Activated CD4-positive, alpha-beta memory T cell treated with anti-CD3 and anti-CD28 coated beads, Interleukin-2, amount 10 ng/mL, durations not matched to agents 7 days and 5 days (primary cell): ENCODE measurements at regions of chr15 and their contacts with region 1.

Region 1: DNA sequence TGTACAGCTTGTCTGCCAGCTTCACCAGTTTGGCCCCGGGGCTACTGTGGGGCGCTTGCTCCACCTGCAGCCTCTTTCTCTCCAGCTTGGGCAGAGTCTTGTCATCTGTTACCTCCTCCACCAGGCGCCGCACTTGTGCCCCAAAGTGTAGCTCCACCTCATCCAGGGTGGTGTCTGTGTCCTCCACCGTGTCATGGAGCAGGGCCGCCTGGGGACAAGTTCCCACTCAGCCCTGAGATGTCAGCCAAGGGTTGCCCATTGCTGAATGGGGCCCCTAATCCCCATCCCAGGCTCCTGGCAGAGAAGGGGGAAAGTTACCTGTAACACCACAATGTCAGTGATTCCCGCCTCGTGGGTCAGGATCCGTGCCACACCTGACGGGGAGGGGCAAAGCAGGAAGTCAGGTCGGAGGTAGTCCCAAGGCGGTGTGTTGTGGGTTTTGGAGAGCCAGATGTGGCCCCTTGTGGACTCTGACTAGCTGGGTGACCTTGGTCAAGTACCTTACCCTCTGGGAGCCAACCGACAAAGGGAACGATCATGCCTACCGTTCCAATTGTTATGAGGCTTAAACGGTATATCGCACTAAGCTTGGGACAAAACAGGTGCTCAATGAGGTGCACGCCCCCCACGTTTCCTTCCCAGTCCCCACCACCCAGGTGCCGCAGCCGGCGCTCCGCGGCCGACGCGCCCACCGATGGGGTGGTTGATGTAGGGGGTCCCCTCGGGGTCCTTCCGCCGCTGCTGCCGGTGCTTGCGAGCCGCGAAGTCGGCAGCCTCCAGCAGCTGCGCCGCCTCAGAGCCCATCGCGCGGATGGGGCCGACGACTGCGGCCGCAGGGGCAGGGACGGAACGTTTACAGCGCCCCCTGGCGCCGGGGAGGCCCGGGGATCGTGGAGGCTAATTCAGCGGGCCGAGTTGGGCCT is at the start of gene HDDC3:
- DNase-seq: peak; percentile 93
- H3K4me3 Mint-ChIP-seq: peak within 1 kb of the TSS; percentile 99
- H3K27ac Mint-ChIP-seq: peak within 1 kb of the TSS; percentile 99
- H3K4me1 Mint-ChIP-seq: peaks cover 61% of the 10 kb centered on the region
- H3K27me3 Mint-ChIP-seq: no peaks in the 10 kb centered on the region
- total RNA-seq, gene HDDC3: 37.6 to 41.7 TPM

Region 2: DNA sequence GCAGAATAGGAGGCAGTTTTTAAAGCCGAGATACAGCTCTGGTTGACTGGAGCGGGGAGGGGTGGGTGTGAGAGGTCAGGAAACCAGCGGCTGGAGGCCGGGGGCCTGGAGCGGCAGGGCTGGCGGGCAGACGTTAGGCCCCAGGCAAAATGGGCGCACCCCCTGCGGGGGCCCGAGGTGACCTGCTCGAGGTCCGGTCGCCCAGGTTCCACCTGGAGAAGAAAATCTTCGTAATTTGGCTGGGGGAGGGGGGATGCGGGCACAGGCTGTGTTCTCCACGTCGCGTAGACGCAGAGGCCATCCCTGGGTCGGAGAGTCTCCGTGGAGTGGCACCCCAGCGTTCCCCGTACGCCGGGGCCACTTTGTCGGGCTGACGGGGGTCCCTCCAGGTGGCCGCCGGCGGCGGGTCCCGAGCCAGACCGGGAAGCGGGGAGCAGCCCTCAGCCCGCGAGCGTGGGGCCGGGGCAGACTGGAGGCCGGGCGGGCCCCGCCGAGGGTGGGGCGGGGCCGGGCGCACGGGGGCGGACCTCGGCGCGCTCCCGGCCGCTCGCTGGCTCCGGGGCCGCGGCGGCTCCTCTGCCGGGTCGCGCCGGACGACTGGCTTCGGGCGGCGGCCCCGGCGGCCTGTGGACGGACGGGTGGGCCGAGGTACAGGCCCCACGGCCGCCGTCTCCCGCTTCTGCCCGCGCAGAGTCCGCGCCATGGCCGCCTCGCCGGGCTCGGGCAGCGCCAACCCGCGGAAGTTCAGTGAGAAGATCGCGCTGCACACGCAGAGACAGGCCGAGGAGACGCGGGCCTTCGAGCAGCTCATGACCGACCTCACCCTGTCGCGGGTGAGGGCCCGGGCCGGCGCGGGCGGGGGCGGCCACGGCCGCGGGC is 402.4 kb before region 1 on chr15 and contains the start of gene CRTC3:
- CTCF ChIA-PET with region 1: interaction called, 4 read pairs
- POLR2A ChIA-PET with region 1: interaction called, 14 read pairs
- DNase-seq: peak; percentile 64
- H3K4me3 Mint-ChIP-seq: peak within 1 kb of the TSS; percentile 94
- H3K27ac Mint-ChIP-seq: peak within 1 kb of the TSS; percentile 79
- H3K4me1 Mint-ChIP-seq: peaks cover 51% of the 10 kb centered on the region
- H3K27me3 Mint-ChIP-seq: no peaks in the 10 kb centered on the region
- total RNA-seq, gene CRTC3: 86.0 to 89.3 TPM

Region 3: GRCh38 chr15:90818251-90819210 is 113.5 kb before region 1 on chr15:
- CTCF ChIA-PET with region 1: interaction called, 8 read pairs
- POLR2A ChIA-PET with region 1: interaction called, 19 read pairs
- DNase-seq: peak; percentile 62
- H3K4me3 Mint-ChIP-seq: peak overlapping the region; percentile 18
- H3K27ac Mint-ChIP-seq: peak overlapping the region; percentile 93
- H3K4me1 Mint-ChIP-seq: peaks cover 80% of the 10 kb centered on the region
- H3K27me3 Mint-ChIP-seq: no peaks in the 10 kb centered on the region

Region 4: DNA sequence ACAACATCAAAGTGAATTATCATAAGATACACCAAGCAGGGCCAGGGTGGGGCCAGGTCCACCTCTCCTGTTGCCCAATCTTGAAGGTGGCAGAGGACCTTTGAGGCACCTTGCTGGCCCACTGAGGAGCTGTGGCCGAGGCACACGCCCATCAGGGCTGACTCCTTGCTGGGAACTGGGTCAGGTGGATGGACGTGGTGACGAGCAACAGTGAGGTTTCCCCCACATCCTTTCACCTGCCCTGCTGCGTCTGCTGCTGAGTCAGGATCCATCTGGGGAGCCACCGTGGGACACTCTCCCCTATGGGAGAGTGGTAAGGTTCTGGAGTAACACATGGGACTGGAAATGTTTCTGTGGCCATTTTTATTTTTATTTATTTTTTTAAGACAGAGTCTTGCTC is 80.9 kb before region 1 on chr15:
- CTCF ChIA-PET with region 1: interaction called, 7 read pairs
- POLR2A ChIA-PET with region 1: interaction called, 12 read pairs
- DNase-seq: peak; percentile 80
- H3K4me3 Mint-ChIP-seq: peak overlapping the region; percentile 63
- H3K27ac Mint-ChIP-seq: peak overlapping the region; percentile 91
- H3K4me1 Mint-ChIP-seq: peaks cover 77% of the 10 kb centered on the region
- H3K27me3 Mint-ChIP-seq: no peaks in the 10 kb centered on the region

Region 5: GRCh38 chr15:90895336-90896117 is 36.5 kb before region 1 on chr15:
- CTCF ChIA-PET with region 1: interaction called, 210 read pairs
- POLR2A ChIA-PET with region 1: interaction called, 211 read pairs
- DNase-seq: no peak
- H3K4me3 Mint-ChIP-seq: no peak overlapping the region
- H3K27ac Mint-ChIP-seq: no peak overlapping the region
- H3K4me1 Mint-ChIP-seq: peaks cover 3% of the 10 kb centered on the region
- H3K27me3 Mint-ChIP-seq: no peaks in the 10 kb centered on the region

Region 6: DNA sequence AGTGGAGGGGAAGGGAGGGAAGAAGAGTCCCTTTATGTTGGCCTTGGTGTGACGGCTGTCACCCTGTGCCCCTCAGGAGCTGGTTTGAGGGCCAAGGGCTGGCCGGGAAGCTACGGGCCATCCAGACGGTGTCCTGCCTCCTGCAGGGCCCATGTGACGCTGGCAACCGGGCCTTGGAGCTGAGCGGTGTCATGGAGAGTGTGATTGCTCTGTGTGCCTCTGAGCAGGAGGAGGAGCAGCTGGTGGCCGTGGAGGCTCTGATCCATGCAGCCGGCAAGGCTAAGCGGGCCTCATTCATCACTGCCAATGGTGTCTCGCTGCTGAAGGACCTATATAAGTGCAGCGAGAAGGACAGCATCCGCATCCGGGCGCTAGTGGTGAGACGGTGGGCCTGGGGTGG is 14.5 kb after region 1 on chr15:
- CTCF ChIA-PET with region 1: interaction called, 167 read pairs
- POLR2A ChIA-PET with region 1: interaction called, 10 read pairs
- DNase-seq: no peak
- H3K4me3 Mint-ChIP-seq: no peak overlapping the region
- H3K27ac Mint-ChIP-seq: no peak overlapping the region
- H3K4me1 Mint-ChIP-seq: peaks cover 3% of the 10 kb centered on the region
- H3K27me3 Mint-ChIP-seq: no peaks in the 10 kb centered on the region

Region 7: GRCh38 chr15:91032919-91033803 is 101.2 kb after region 1 on chr15:
- CTCF ChIA-PET with region 1: interaction called, 12 read pairs
- POLR2A ChIA-PET with region 1: interaction called, 3 read pairs
- DNase-seq: peak; percentile 69
- H3K4me3 Mint-ChIP-seq: no peak overlapping the region
- H3K27ac Mint-ChIP-seq: no peak overlapping the region
- H3K4me1 Mint-ChIP-seq: peaks cover 4% of the 10 kb centered on the region
- H3K27me3 Mint-ChIP-seq: peaks cover 5% of the 10 kb centered on the region

Region 8: DNA sequence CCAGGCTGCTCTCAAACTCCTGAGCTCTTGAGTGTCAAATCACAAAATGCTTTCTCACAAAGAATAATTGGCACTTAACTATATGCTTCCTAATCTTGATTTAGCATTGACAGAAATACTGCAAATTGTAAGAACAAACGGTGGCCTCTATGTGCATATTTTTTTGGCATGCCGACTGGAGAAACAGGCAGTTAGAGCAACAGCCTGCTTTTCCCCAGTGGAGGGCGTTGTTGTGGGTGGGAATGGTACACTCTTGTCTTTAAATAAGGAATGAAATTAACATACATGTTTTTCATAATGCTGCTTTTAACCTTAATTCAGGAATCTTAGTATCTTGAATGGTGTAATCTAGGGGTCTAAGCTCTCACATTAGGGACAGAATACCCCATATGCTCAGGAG is 137.0 kb after region 1 on chr15:
- CTCF ChIA-PET with region 1: no interaction called
- POLR2A ChIA-PET with region 1: no interaction called
- DNase-seq: no peak
- H3K4me3 Mint-ChIP-seq: no peak overlapping the region
- H3K27ac Mint-ChIP-seq: no peak overlapping the region
- H3K4me1 Mint-ChIP-seq: no peaks in the 10 kb centered on the region
- H3K27me3 Mint-ChIP-seq: peaks cover 37% of the 10 kb centered on the region

Region 9: GRCh38 chr15:91142114-91142731 is 210.2 kb after region 1 on chr15:
- CTCF ChIA-PET with region 1: no interaction called
- POLR2A ChIA-PET with region 1: no interaction called
- DNase-seq: no peak
- H3K4me3 Mint-ChIP-seq: no peak overlapping the region
- H3K27ac Mint-ChIP-seq: no peak overlapping the region
- H3K4me1 Mint-ChIP-seq: no peaks in the 10 kb centered on the region
- H3K27me3 Mint-ChIP-seq: peaks cover 44% of the 10 kb centered on the region